Lower lobe of right lung (tissue), 2 donors: ENCODE measurements at regions of chr7 and their contacts with region 1.

Region 1: GRCh38 chr7:70972693-70973092 is 159.3 kb upstream of the GALNT17 start:
- DNase-seq: no peak
- ATAC-seq: no peak
- H3K4me3 ChIP-seq: no peak overlapping the region
- H3K27ac ChIP-seq: no peak overlapping the region
- H3K4me1 ChIP-seq: no peaks in the 10 kb centered on the region
- H3K27me3 ChIP-seq: no peaks in the 10 kb centered on the region
- CTCF ChIP-seq: no peak

Region 2: DNA sequence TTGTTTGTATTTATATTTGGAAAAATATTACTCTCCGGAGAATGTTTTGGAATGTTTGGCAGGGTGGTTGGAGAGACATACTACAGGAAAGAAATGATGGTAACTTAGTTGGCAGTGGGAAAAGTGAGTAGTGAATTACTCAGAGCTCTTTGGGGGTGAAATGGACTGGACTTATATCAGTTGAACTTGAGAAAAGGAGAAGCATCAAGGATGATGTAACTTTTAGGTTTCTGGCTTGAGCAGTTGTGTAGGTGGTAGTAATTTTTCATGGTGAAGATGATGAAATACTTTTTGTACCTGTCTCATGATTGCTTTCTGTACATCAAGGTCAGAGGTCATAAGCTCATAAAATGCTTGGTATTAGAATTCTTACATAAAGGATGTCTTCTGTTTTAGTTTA is 757.2 kb before region 1 on chr7:
- intact Hi-C with region 1: no loop called
- DNase-seq: no peak
- ATAC-seq: no peak
- H3K4me3 ChIP-seq: no peak overlapping the region
- H3K27ac ChIP-seq: no peak overlapping the region
- H3K4me1 ChIP-seq: no peaks in the 10 kb centered on the region
- H3K27me3 ChIP-seq: no peaks in the 10 kb centered on the region
- CTCF ChIP-seq: no peak

Region 3: GRCh38 chr7:70953796-70954195 is 18.9 kb before region 1 on chr7:
- intact Hi-C with region 1: loop called (anchors 2 kb)
- DNase-seq: no peak
- ATAC-seq: no peak
- H3K4me3 ChIP-seq: no peak overlapping the region
- H3K27ac ChIP-seq: no peak overlapping the region
- H3K4me1 ChIP-seq: no peaks in the 10 kb centered on the region
- H3K27me3 ChIP-seq: no peaks in the 10 kb centered on the region
- CTCF ChIP-seq: no peak

Region 4: DNA sequence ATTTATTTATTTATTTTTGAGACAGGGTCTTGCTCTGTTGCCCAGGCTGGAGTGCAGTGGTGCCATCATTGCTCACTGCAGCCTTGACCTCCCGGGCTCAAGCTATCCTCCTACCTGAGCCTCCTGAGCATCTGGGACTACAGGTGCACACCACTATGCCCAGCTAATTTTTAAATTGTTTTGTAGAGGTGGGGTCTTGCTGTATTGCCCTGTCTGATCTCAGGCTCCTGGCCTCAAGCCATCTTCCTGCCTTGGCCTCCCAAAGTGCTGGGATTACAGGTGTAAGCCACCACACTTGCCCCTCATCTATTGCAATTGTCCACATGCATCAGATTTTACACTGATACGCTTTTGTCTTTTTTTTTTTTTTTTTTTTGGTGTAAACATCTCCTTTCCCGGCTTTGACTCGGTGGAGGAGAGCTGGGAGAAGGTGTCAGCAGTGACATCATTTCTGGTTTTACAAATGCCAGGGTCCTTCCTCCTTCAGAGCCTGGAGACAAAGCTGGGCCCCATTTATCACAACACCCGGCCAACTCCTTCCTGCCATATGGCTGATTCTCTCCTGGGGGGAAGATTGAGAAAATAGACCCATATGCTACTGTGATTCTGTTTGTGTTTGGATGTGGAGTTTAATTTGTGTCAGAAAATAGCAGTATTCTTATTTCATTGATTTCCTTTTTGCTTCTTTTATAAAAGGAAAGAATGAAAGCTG is 220.6 kb after region 1 on chr7:
- intact Hi-C with region 1: no loop called
- DNase-seq: no peak
- ATAC-seq: no peak
- H3K4me3 ChIP-seq: no peak overlapping the region
- H3K27ac ChIP-seq: no peak overlapping the region
- H3K4me1 ChIP-seq: no peaks in the 10 kb centered on the region
- H3K27me3 ChIP-seq: no peaks in the 10 kb centered on the region
- CTCF ChIP-seq: no peak